ENCODE measurements at regions of chr11 and their contacts with region 1.

Region 1: DNA sequence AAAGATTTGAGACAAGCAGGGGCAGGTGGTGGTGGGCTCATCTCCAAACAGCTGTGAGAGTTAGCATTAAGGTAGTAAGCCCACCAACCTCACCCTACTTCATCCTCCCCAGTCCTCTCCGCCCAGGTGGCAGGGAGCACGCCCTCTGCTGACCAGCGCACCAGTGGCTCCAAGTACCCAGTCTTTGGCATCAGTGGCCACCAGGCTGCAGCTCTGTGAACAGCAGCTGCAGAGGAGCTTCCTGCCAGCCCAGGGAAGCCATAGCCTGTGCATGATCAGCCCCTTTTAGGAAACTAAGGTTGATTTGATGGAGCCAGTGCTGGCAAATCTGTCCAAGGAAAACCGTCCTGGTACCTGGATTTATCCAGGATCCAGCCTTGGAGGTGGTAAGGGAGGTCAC is 21.7 kb downstream of the CAVIN3 start:
- DNase-seq: peak; percentile 59
- ATAC-seq: peak; percentile 77
- H3K4me3 Mint-ChIP-seq: no peak overlapping the region
- H3K27ac Mint-ChIP-seq: no peak overlapping the region
- H3K4me1 Mint-ChIP-seq: no peaks in the 10 kb centered on the region
- H3K27me3 Mint-ChIP-seq: peaks cover 9% of the 10 kb centered on the region

Region 2: GRCh38 chr11:6022956-6023355 is 275.6 kb before region 1 on chr11:
- CTCF ChIA-PET with region 1: no interaction called
- POLR2A ChIA-PET with region 1: no interaction called
- intact Hi-C with region 1: loop called in 1 of 2 experiments (anchors 5 kb)
- DNase-seq: no peak
- ATAC-seq: peak; percentile 55
- H3K4me3 Mint-ChIP-seq: no peak overlapping the region
- H3K27ac Mint-ChIP-seq: no peak overlapping the region
- H3K4me1 Mint-ChIP-seq: no peaks in the 10 kb centered on the region
- H3K27me3 Mint-ChIP-seq: peaks cover 21% of the 10 kb centered on the region

Region 3: GRCh38 chr11:7457211-7457610 is 1158.6 kb after region 1 on chr11:
- CTCF ChIA-PET with region 1: no interaction called
- POLR2A ChIA-PET with region 1: no interaction called
- intact Hi-C with region 1: no loop called
- DNase-seq: no peak
- ATAC-seq: no peak
- H3K4me3 Mint-ChIP-seq: no peak overlapping the region
- H3K27ac Mint-ChIP-seq: no peak overlapping the region
- H3K4me1 Mint-ChIP-seq: peaks cover under 1% of the 10 kb centered on the region
- H3K27me3 Mint-ChIP-seq: peaks cover 2% of the 10 kb centered on the region